GM12878 (cell line): ENCODE measurements at regions of chr15 and their contacts with region 1.

Region 1: GRCh38 chr15:35181538-35181937 is 96.4 kb upstream of the NANOGP8 start:
- DNase-seq: peak; percentile 21
- ATAC-seq: peak; percentile 81
- H3K4me3 ChIP-seq: no peak overlapping the region
- H3K27ac ChIP-seq: no peak overlapping the region
- H3K4me1 ChIP-seq: peaks cover 3% of the 10 kb centered on the region; the same call in 1 of the 2 replicates
- H3K27me3 ChIP-seq: no peaks in the 10 kb centered on the region
- CTCF ChIP-seq: no peak
- EP300 ChIP-seq: no peak
- POLR2A ChIP-seq: no peak
- RAD21 ChIP-seq: no peak

Region 2: DNA sequence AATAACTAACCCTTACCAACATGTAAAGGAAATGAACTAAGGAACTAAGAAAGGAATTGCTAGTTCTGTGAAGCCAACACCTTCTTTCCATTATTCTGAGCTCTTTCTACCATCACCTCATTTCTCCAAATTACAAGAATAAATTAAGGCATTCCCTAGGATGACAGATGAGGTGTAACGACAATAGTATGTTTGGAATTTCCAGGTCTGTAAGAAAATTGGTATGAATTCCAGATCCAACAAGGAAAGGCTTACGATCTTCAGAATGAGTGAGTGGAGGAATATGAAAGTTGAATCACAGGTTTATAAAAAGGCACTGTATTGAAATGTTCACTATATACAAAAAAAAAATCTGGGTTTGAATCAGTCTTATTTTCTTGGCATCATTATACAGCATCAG is 92.0 kb before region 1 on chr15:
- CTCF ChIA-PET with region 1: no interaction called
- POLR2A ChIA-PET with region 1: no interaction called
- RAD21 ChIA-PET with region 1: no interaction called
- SMC1A ChIA-PET with region 1: no interaction called
- in situ Hi-C with region 1: no loop called
- intact Hi-C with region 1: loop called (anchors 10 kb)
- DNase-seq: no peak
- ATAC-seq: no peak
- H3K4me3 ChIP-seq: no peak overlapping the region
- H3K27ac ChIP-seq: no peak overlapping the region
- H3K4me1 ChIP-seq: no peaks in the 10 kb centered on the region
- H3K27me3 ChIP-seq: no peaks in the 10 kb centered on the region
- CTCF ChIP-seq: no peak
- EP300 ChIP-seq: no peak
- POLR2A ChIP-seq: no peak
- RAD21 ChIP-seq: no peak

Region 3: GRCh38 chr15:35136321-35137189 is 45.0 kb before region 1 on chr15:
- CTCF ChIA-PET with region 1: interaction called, 3 read pairs
- POLR2A ChIA-PET with region 1: no interaction called
- RAD21 ChIA-PET with region 1: interaction called, 11 read pairs
- SMC1A ChIA-PET with region 1: interaction called, 5 read pairs
- in situ Hi-C with region 1: no loop called
- intact Hi-C with region 1: no loop called
- DNase-seq: peak; percentile 94
- ATAC-seq: peak; percentile 99
- H3K4me3 ChIP-seq: no peak overlapping the region
- H3K27ac ChIP-seq: peak overlapping the region; percentile 77; the same call in 1 of the 2 replicates
- H3K4me1 ChIP-seq: peaks cover 10% of the 10 kb centered on the region
- H3K27me3 ChIP-seq: no peaks in the 10 kb centered on the region
- CTCF ChIP-seq: no peak
- EP300 ChIP-seq: peak; percentile 99
- POLR2A ChIP-seq: no peak
- RAD21 ChIP-seq: 0 out of 2 replicates have a peak, but pooled peaks have one; percentile 0

Region 4: GRCh38 chr15:35170207-35170606 is 11.3 kb before region 1 on chr15:
- CTCF ChIA-PET with region 1: no interaction called
- POLR2A ChIA-PET with region 1: no interaction called
- RAD21 ChIA-PET with region 1: no interaction called
- SMC1A ChIA-PET with region 1: interaction called, 10 read pairs
- in situ Hi-C with region 1: no loop called
- intact Hi-C with region 1: no loop called
- DNase-seq: no peak
- ATAC-seq: no peak
- H3K4me3 ChIP-seq: no peak overlapping the region
- H3K27ac ChIP-seq: no peak overlapping the region
- H3K4me1 ChIP-seq: no peaks in the 10 kb centered on the region
- H3K27me3 ChIP-seq: no peaks in the 10 kb centered on the region
- CTCF ChIP-seq: no peak
- EP300 ChIP-seq: no peak
- POLR2A ChIP-seq: no peak
- RAD21 ChIP-seq: no peak

Region 5: GRCh38 chr15:36858423-36858822 is 1676.9 kb after region 1 on chr15:
- CTCF ChIA-PET with region 1: no interaction called
- POLR2A ChIA-PET with region 1: no interaction called
- RAD21 ChIA-PET with region 1: no interaction called
- SMC1A ChIA-PET with region 1: no interaction called
- in situ Hi-C with region 1: no loop called
- intact Hi-C with region 1: no loop called
- DNase-seq: no peak
- ATAC-seq: no peak
- H3K4me3 ChIP-seq: no peak overlapping the region
- H3K27ac ChIP-seq: no peak overlapping the region
- H3K4me1 ChIP-seq: no peaks in the 10 kb centered on the region
- H3K27me3 ChIP-seq: no peaks in the 10 kb centered on the region
- CTCF ChIP-seq: no peak
- EP300 ChIP-seq: no peak
- POLR2A ChIP-seq: no peak
- RAD21 ChIP-seq: no peak